ENCODE measurements at regions of chrX and their contacts with region 1.

Region 1: GRCh38 chrX:45769761-45770582 is 569.3 kb upstream of the DIPK2B start:
- DNase-seq: peak; percentile 51
- ATAC-seq: peak; percentile 83
- H3K4me3 ChIP-seq: peak overlapping the region; percentile 65; the same call in 1 of the 2 replicates
- H3K27ac ChIP-seq: no peak overlapping the region; the same call in 1 of the 2 replicates
- H3K4me1 ChIP-seq: peaks cover 4% of the 10 kb centered on the region
- H3K27me3 ChIP-seq: 0 out of 4 replicates have a peak, but pooled peaks cover 0 to 3% of the 10 kb centered on the region in 2 experiments
- CTCF ChIP-seq: no peak
- EP300 ChIP-seq: no peak
- POLR2A ChIP-seq: peak; percentile 65
- RAD21 ChIP-seq: no peak

Region 2: DNA sequence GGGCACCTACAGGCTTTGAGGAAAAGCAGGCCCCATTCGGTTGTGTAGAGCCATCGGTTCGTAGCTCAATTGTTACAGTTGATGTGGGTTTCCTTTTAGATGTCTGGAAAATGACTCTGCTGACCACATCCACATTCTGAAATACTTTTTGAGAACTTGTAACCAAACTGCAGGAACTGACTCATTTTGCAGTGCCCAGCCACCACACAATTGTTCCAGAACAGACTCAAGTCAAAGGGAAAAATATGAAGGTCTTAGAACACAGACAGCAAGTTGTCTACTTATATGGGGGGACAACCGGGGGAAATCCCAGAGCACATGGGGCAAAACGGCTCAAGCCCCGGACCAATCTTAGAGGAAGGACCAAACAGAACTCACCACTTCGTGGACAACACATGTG is 11.7 kb before region 1 on chrX:
- CTCF ChIA-PET with region 1: interaction called, 7 read pairs
- POLR2A ChIA-PET with region 1: interaction called, 9 read pairs
- RAD21 ChIA-PET with region 1: interaction called, 6 read pairs
- SMC1A ChIA-PET with region 1: interaction called, 20 read pairs
- in situ Hi-C with region 1: no loop called
- intact Hi-C with region 1: no loop called
- DNase-seq: peak; percentile 61
- ATAC-seq: peak; percentile 57
- H3K4me3 ChIP-seq: no peak overlapping the region
- H3K27ac ChIP-seq: peak overlapping the region; percentile 62
- H3K4me1 ChIP-seq: peaks cover 20% of the 10 kb centered on the region
- H3K27me3 ChIP-seq: no peaks in the 10 kb centered on the region
- CTCF ChIP-seq: no peak
- EP300 ChIP-seq: peak; percentile 64 to 73; a peak in 3 of 4 replicates
- POLR2A ChIP-seq: no peak
- RAD21 ChIP-seq: 0 out of 2 replicates have a peak, but pooled peaks have one; percentile 1

Measured in GM12878 (cell line).